AG04449 (cell line): ENCODE measurements at regions of chr20 and their contacts with region 1.

Region 1: DNA sequence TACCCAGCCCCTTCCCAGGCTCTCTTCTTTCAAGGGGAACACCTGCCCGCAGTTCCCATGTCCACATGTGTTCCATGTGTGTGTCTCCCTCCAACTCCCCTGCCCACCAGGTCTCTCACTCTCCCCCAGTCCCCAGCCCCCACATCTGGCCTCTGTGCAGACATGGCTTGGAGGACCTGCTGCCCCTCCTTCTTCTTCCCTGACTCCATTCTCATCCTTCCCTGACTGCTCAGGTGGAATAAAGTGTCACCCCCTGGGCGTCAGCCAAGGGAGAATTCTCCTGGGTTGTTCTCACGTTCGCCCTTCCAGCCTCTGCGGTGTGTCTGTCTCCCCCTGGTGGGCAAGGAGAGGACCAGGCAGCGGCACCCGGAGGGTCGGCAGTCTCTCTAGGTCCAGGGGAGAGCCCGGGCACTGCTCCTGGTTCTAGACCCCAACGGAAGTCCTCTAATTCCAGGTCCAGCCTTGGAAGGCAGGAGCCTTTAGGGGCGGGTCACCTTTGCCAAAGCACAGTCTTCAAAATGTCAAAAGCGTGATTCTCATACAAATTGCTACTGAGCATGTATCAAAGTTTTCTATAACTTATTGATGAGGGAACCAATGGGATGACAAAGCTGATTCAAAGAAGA is 50.5 kb downstream of the EBF4 start:
- DNase-seq: no peak
- H3K4me3 ChIP-seq: no peak overlapping the region
- CTCF ChIP-seq: peak; percentile 92

Region 2: DNA sequence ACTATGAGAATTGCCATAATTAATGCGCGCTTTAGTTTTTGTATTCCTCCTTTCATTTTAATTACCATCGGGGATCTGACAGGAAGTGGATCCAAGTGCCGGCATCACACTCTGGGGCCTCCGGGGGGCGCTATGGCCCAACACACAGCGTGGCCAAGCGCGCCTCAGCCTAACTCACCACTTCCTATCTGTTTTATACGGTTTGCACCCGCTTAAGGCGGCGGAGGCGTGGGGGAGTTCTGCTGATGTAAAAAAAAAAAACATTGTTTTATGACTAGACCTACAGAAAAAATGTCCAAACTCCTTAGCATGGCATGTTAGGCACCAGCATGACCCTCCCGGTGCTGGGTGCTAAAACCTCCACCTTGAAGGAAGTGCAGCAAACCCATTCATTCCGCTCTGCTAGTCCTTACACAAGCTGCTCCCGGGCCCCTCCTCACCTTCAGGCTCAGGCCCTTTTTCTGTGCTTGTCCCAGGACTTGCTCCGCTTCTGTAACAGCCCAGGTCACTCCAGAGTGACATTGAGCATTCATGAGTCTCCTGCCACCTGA is 54.9 kb before region 1 on chr20:
- CTCF ChIA-PET with region 1: interaction called, 77 read pairs
- POLR2A ChIA-PET with region 1: no interaction called
- DNase-seq: peak; percentile 3
- H3K4me3 ChIP-seq: no peak overlapping the region
- CTCF ChIP-seq: peak; percentile 78

Region 3: GRCh38 chr20:2713285-2713684 is 29.8 kb before region 1 on chr20:
- CTCF ChIA-PET with region 1: interaction called, 25 read pairs
- POLR2A ChIA-PET with region 1: no interaction called
- DNase-seq: no peak
- H3K4me3 ChIP-seq: no peak overlapping the region
- CTCF ChIP-seq: no peak

Region 4: GRCh38 chr20:2729251-2729713 is 13.8 kb before region 1 on chr20:
- CTCF ChIA-PET with region 1: interaction called, 42 read pairs
- POLR2A ChIA-PET with region 1: no interaction called
- DNase-seq: no peak
- H3K4me3 ChIP-seq: no peak overlapping the region
- CTCF ChIP-seq: no peak

Region 5: GRCh38 chr20:2773812-2774211 is 30.8 kb after region 1 on chr20:
- CTCF ChIA-PET with region 1: no interaction called
- POLR2A ChIA-PET with region 1: no interaction called
- DNase-seq: no peak
- H3K4me3 ChIP-seq: no peak overlapping the region
- CTCF ChIP-seq: no peak

Region 6: GRCh38 chr20:2865630-2866029 is 122.6 kb after region 1 on chr20:
- CTCF ChIA-PET with region 1: no interaction called
- POLR2A ChIA-PET with region 1: no interaction called
- DNase-seq: no peak
- H3K4me3 ChIP-seq: no peak overlapping the region
- CTCF ChIP-seq: peak; percentile 2